MCF 10A (cell line): ENCODE measurements at regions of chr2 and their contacts with region 1.

Region 1: GRCh38 chr2:37635504-37636380 is 35.7 kb downstream of the CDC42EP3 start:
- DNase-seq: peak; percentile 92
- H3K4me3 Mint-ChIP-seq: no peak overlapping the region
- H3K27ac Mint-ChIP-seq: peak overlapping the region; percentile 75
- H3K4me1 Mint-ChIP-seq: peaks cover 38% of the 10 kb centered on the region
- H3K27me3 Mint-ChIP-seq: no peaks in the 10 kb centered on the region
- CTCF ChIP-seq: no peak

Region 2: GRCh38 chr2:37561615-37562569 is 73.8 kb before region 1 on chr2:
- CTCF ChIA-PET with region 1: no interaction called
- POLR2A ChIA-PET with region 1: no interaction called
- intact Hi-C with region 1: loop called (anchors 1 kb)
- DNase-seq: peak; percentile 93
- H3K4me3 Mint-ChIP-seq: no peak overlapping the region
- H3K27ac Mint-ChIP-seq: peak overlapping the region; percentile 87
- H3K4me1 Mint-ChIP-seq: peaks cover 26% of the 10 kb centered on the region
- H3K27me3 Mint-ChIP-seq: no peaks in the 10 kb centered on the region
- CTCF ChIP-seq: no peak